ENCODE measurements at regions of chr17 and their contacts with region 1.

Region 1: GRCh38 chr17:57833179-57833939 is 16.5 kb downstream of the MRPS23 start:
- DNase-seq: peak; percentile 84
- ATAC-seq: peak; percentile 75
- H3K4me3 Mint-ChIP-seq: no peak overlapping the region
- H3K27ac Mint-ChIP-seq: no peak overlapping the region
- H3K4me1 Mint-ChIP-seq: peaks cover 8% of the 10 kb centered on the region
- H3K27me3 Mint-ChIP-seq: no peaks in the 10 kb centered on the region
- CTCF ChIP-seq: peak; percentile 92

Region 2: DNA sequence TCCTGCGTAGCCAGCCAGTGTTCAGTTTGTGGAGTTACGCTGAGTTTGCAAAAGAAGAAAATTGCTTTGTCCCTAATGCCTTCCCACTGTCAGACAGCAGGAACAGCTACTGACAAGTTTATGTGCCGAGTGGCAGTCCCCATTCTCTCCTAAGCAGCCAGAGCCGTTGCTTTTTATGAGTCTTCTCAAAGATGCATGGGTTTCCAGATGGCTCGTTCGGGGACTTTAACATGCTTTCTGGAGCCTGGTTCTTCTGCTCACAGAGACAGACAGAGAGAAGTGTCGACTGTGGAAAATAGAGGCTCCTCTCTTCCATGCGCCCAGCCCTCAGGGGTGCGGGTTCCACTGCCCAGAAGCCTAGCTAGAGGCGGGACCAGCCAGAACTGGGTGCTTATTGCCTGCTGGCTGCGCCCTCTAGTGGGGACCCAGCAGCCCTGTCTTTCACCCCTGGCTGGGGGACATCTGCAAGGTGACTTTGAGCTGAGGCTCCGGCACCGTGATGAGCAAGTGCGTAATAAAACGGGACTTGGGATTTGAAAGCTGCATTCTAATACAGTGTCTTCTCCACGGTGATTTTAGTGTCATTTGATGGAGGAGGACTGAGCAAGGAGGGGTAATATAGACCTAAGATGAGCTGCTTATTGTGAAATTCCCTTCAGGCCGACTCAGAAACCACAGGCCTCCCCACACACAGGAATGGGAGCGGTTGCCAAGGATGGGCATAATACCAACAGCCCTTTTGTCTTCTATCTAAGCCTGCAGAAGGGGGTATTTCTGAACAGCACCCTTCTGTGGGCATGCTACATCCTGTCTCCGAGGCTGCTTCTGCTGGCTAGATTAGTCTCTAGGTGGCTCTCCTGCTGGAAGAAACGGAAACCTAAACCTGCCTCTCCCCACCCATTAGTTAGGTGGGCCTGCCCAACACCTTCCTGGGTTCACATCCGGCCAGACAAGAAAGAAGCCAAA is 161.4 kb before region 1 on chr17:
- CTCF ChIA-PET with region 1: interaction called, 20 read pairs
- POLR2A ChIA-PET with region 1: no interaction called
- intact Hi-C with region 1: no loop called
- DNase-seq: peak; percentile 82
- ATAC-seq: peak; percentile 87
- H3K4me3 Mint-ChIP-seq: no peak overlapping the region
- H3K27ac Mint-ChIP-seq: peak overlapping the region; percentile 86
- H3K4me1 Mint-ChIP-seq: peaks cover 37% of the 10 kb centered on the region
- H3K27me3 Mint-ChIP-seq: no peaks in the 10 kb centered on the region
- CTCF ChIP-seq: peak; percentile 94

Region 3: GRCh38 chr17:57783106-57783742 is 50.1 kb before region 1 on chr17:
- CTCF ChIA-PET with region 1: interaction called, 47 read pairs
- POLR2A ChIA-PET with region 1: interaction called, 3 read pairs
- intact Hi-C with region 1: no loop called
- DNase-seq: peak; percentile 87
- ATAC-seq: peak; percentile 98
- H3K4me3 Mint-ChIP-seq: no peak overlapping the region
- H3K27ac Mint-ChIP-seq: no peak overlapping the region
- H3K4me1 Mint-ChIP-seq: no peaks in the 10 kb centered on the region
- H3K27me3 Mint-ChIP-seq: peaks cover 8% of the 10 kb centered on the region
- CTCF ChIP-seq: peak; percentile 98

Region 4: GRCh38 chr17:57818066-57818465 is 15.3 kb before region 1 on chr17:
- CTCF ChIA-PET with region 1: interaction called, 30 read pairs
- POLR2A ChIA-PET with region 1: no interaction called
- intact Hi-C with region 1: no loop called
- DNase-seq: no peak
- ATAC-seq: no peak
- H3K4me3 Mint-ChIP-seq: no peak overlapping the region
- H3K27ac Mint-ChIP-seq: no peak overlapping the region
- H3K4me1 Mint-ChIP-seq: no peaks in the 10 kb centered on the region
- H3K27me3 Mint-ChIP-seq: peaks cover 18% of the 10 kb centered on the region
- CTCF ChIP-seq: no peak

Region 5: DNA sequence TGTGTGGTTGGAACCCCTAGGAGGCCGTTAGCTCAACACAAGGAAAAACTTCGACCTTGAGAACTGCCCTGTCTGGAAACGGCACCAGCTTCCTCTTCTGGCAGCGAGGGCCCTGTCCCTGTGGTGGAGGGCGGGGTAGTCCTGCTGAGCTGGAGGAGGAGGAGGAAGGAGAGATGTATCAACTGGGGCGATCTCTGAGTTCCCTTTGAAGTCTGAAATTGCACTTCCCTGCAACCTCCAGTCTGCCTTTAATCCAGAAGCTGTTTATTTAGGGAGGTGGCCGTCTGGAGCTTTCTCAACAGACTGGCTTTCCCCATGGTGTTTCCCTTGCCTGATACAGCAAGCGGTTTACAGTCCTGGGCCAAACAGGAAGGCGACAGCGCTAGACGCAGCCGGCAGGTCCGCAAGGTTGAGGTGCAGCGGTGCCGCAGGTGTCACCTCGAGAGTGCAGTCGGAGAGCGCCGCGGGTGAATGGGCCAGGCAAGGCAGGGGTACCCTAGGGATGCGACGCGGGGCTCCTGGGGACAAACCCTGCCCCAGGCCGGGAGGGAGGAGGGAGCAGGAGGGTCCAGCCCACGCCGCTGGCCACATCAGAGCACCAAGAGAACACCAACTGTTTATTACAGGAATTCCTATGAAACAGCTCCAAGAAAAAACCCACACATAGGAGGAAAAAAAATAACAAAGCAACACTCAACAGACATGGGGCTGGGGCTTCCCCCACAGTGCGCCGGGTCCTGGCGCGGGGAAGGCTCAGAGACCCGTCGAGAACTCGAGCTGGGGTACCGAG is 27.8 kb after region 1 on chr17:
- CTCF ChIA-PET with region 1: interaction called, 11 read pairs
- POLR2A ChIA-PET with region 1: no interaction called
- intact Hi-C with region 1: no loop called
- DNase-seq: peak; percentile 41
- ATAC-seq: peak; percentile 75
- H3K4me3 Mint-ChIP-seq: peak overlapping the region; percentile 62
- H3K27ac Mint-ChIP-seq: no peak overlapping the region
- H3K4me1 Mint-ChIP-seq: peaks cover 13% of the 10 kb centered on the region
- H3K27me3 Mint-ChIP-seq: peaks cover 35% of the 10 kb centered on the region
- CTCF ChIP-seq: no peak

Region 6: GRCh38 chr17:57987580-57988421 is 154.4 kb after region 1 on chr17 and contains the start of gene VEZF1:
- CTCF ChIA-PET with region 1: interaction called, 12 read pairs
- POLR2A ChIA-PET with region 1: no interaction called
- intact Hi-C with region 1: no loop called
- DNase-seq: peak; percentile 81
- ATAC-seq: peak; percentile 64
- H3K4me3 Mint-ChIP-seq: peak within 1 kb of the TSS; percentile 87
- H3K27ac Mint-ChIP-seq: peak within 1 kb of the TSS; percentile 91
- H3K4me1 Mint-ChIP-seq: peaks cover 67% of the 10 kb centered on the region
- H3K27me3 Mint-ChIP-seq: no peaks in the 10 kb centered on the region
- CTCF ChIP-seq: no peak
- total RNA-seq, gene VEZF1: 17.9 to 19.6 TPM

Measured in activated CD8-positive, alpha-beta T cell treated with anti-CD3 and anti-CD28 coated beads for 36 hours (primary cell).